ENCODE measurements at regions of chr2 and their contacts with region 1.

Region 1: DNA sequence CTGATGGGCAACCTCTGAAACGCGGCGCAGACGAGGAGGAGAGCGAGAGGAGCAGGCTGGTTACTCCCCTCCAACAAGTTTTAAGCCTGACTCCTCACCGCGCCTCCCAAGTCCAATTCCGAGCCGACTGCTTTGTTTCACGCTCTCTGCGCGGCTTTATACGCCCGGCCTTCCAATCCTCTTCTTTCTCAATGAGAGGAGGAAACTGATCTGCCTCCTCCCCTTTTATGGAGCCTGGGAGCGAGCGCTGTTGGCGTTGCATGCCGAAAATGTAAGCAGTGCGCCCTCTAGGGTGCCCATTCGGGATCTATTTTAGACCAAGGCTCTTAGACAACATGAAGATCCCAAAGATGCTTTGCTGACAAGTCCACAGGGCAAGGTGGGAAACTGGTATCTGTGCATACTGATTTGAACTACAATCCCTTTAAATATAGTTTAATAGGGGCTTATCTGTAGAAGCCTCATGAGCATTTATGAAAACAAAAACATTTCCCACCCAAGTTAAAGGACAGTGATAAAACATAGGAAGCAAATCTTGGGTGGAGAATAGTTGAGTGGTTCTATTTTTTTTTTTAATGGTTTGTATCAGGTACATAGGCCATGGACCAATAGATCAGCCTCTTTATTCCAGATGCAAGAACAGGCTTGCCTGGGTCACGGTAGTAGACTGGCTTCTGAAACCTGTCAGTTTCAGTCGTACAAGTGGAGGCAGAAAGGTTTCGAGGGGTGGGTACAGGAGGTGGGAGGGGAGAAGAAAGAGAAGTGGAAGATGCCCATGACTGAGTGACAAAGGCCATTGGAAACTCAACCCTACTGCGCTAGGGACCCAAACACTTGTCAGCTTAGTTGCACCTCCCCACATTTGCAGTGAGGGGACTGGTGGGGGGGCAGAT is at the start of gene RND3:
- DNase-seq: peak; percentile 96
- ATAC-seq: peak; percentile 76
- total RNA-seq, gene RND3: 20.4 TPM

Region 2: GRCh38 chr2:149808556-149808955 is 679.2 kb before region 1 on chr2:
- intact Hi-C with region 1: loop called (anchors 10 kb)
- DNase-seq: no peak
- ATAC-seq: no peak

Region 3: DNA sequence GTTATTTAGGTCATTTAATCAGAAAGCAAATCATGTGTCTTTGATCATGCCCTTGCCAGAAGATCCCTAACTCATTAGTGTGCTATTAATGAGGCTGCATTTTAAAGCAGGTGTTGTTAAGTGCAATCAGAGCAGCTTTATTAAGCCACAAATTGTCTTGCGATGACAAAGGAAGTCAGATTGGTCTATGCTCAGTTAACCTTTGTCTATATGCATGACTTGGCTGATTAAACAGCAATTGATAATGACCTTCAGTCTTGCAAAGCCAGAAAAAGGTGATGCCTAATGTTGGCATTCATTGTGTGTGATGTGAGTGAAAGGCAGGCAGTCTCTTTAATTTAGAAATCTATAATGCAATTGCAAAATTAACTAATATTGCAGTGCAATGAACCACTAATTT is 167.2 kb before region 1 on chr2:
- intact Hi-C with region 1: no loop called
- DNase-seq: no peak
- ATAC-seq: no peak

Region 4: GRCh38 chr2:150601280-150602038 is 113.7 kb after region 1 on chr2:
- intact Hi-C with region 1: loop called (anchors 10 kb)
- DNase-seq: no peak
- ATAC-seq: no peak

Region 5: DNA sequence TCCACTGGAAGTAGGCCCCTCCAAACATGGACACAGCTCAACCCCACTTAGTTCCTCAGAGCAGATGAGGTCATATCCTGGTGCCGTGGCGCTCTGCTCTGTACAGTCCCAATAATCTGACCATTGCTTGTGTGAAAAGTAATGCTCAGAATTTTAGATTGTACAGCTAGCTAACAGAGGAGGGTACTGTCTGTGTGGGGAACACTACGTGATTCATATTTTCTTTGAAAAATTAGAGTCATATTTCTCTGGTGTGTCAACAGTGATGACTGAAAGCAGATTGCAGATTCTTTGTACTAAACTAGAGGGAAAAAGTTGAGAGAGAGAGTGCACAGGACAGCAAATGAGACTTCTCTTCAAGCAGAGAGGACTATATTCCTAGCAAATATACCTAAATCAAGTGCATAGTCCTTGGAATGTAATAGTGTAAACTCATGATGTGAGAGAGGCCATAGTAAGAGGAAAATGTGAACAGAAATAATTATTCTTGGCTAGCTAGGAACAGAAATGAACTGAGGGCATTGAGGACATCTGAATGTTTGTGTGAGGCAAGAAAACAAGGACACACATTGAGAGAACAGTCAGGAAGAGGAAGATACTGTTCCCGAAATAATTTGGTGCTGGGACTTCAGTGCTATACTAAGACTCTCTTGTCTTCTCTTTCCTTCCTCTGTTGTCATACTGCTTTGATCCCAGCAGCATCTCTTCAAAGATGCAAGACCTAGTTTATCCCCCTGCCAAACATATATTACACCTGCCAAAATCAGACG is 156.7 kb after region 1 on chr2:
- intact Hi-C with region 1: no loop called
- DNase-seq: peak; percentile 44
- ATAC-seq: peak; percentile 52

Region 6: DNA sequence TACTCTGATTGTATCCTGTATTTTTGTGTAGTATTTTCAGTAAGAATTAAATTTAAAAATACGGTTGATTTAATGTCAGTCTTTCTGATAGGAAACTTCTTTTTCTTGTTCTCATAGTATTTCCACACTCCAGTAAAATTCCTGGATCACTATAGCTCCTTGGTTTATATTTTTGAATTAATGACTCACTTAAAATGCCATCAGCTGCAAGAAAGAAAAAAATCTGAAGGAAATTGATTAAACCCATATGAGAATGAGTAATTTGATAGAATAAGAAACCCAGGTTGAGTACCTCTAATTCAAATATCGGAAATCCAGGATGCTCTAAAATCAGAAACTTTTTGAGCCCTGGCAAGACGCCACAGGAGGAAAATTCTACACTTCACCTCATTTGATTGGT is 186.5 kb after region 1 on chr2:
- intact Hi-C with region 1: no loop called
- DNase-seq: no peak
- ATAC-seq: no peak

Region 7: GRCh38 chr2:151905963-151906632 is 1418.3 kb after region 1 on chr2:
- intact Hi-C with region 1: no loop called
- DNase-seq: no peak
- ATAC-seq: peak; percentile 60

Measured in Right ventricle myocardium superior (tissue), 1 donor.